Caco-2 (cell line): ENCODE measurements at regions of chr10 and their contacts with region 1.

Region 1: GRCh38 chr10:1420661-1421362 is 316.5 kb downstream of the ADARB2 start:
- DNase-seq: peak; percentile 82 to 87
- H3K4me3 ChIP-seq: peak overlapping the region; percentile 10; the same call in 1 of the 2 replicates
- H3K4me3 Mint-ChIP-seq: peak overlapping the region; percentile 60
- H3K27ac Mint-ChIP-seq: no peak overlapping the region
- H3K4me1 ChIP-seq: peaks cover 6% of the 10 kb centered on the region; the same call in 1 of the 2 replicates
- H3K4me1 Mint-ChIP-seq: peaks cover 11% of the 10 kb centered on the region
- H3K27me3 ChIP-seq: peaks cover 2% of the 10 kb centered on the region; the same call in 1 of the 2 replicates
- H3K27me3 Mint-ChIP-seq: peaks cover 20% of the 10 kb centered on the region
- CTCF ChIP-seq: peak; percentile 95 to 97

Region 2: GRCh38 chr10:1379601-1380000 is 41.2 kb before region 1 on chr10:
- CTCF ChIA-PET with region 1: no interaction called
- POLR2A ChIA-PET with region 1: no interaction called
- intact Hi-C with region 1: no loop called
- DNase-seq: peak in 1 of 2 experiments; percentile 35
- H3K4me3 ChIP-seq: no peak overlapping the region
- H3K4me3 Mint-ChIP-seq: no peak overlapping the region
- H3K27ac Mint-ChIP-seq: no peak overlapping the region
- H3K4me1 ChIP-seq: peaks cover 5% of the 10 kb centered on the region; the same call in 1 of the 2 replicates
- H3K4me1 Mint-ChIP-seq: peaks cover 10% of the 10 kb centered on the region
- H3K27me3 ChIP-seq: peaks cover 8% of the 10 kb centered on the region
- H3K27me3 Mint-ChIP-seq: peaks cover 45% of the 10 kb centered on the region
- CTCF ChIP-seq: no peak

Region 3: GRCh38 chr10:1465993-1466764 is 45.4 kb after region 1 on chr10:
- CTCF ChIA-PET with region 1: no interaction called
- POLR2A ChIA-PET with region 1: no interaction called
- intact Hi-C with region 1: loop called (anchors 2 kb)
- DNase-seq: no peak
- H3K4me3 ChIP-seq: no peak overlapping the region
- H3K4me3 Mint-ChIP-seq: no peak overlapping the region
- H3K27ac Mint-ChIP-seq: no peak overlapping the region
- H3K4me1 ChIP-seq: peaks cover 5% of the 10 kb centered on the region; the same call in 1 of the 2 replicates
- H3K4me1 Mint-ChIP-seq: no peaks in the 10 kb centered on the region
- H3K27me3 ChIP-seq: peaks cover 1% of the 10 kb centered on the region; the same call in 1 of the 2 replicates
- H3K27me3 Mint-ChIP-seq: peaks cover 30% of the 10 kb centered on the region
- CTCF ChIP-seq: no peak

Region 4: DNA sequence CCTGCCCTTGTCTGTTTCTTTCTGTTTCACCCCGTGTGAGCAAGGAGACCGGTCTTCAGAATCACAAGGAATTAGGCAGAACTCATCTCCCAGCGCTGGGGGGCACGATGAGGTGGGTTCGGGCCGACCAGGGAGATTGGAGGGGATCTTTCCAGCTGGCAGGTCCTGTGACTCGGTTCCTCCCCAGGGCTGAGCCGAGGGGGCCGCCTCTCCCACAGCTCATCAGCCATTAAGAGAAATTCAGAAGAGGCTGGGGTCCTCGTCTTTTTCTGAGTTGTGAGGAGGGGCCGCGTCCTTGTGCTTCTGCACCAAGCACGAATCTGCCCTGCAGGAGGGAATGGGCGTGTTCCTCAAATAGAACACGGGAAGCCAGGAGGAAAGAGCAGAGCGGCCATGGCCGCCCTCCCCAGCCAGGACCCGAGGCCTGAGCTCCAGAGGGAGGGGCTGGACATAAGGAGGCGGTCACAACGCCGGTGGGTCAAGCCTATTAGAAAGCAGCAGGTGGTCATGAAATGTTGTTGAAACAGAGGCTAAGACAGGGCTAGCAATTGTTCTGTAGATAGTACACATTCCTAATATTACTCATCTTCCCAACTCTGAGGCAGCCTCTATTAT is 191.2 kb after region 1 on chr10:
- CTCF ChIA-PET with region 1: no interaction called
- POLR2A ChIA-PET with region 1: no interaction called
- intact Hi-C with region 1: loop called (anchors 5 kb)
- DNase-seq: no peak
- H3K4me3 ChIP-seq: no peak overlapping the region
- H3K4me3 Mint-ChIP-seq: no peak overlapping the region
- H3K27ac Mint-ChIP-seq: no peak overlapping the region
- H3K4me1 ChIP-seq: no peaks in the 10 kb centered on the region
- H3K4me1 Mint-ChIP-seq: no peaks in the 10 kb centered on the region
- H3K27me3 ChIP-seq: no peaks in the 10 kb centered on the region; the same call in 1 of the 2 replicates
- H3K27me3 Mint-ChIP-seq: peaks cover 34% of the 10 kb centered on the region
- CTCF ChIP-seq: no peak